ENCODE measurements at regions of chr19 and their contacts with region 1.

Region 1: GRCh38 chr19:4909897-4910593 is 744 bp downstream of the UHRF1 start:
- DNase-seq: peak; percentile 92
- H3K4me3 Mint-ChIP-seq: peak overlapping the region; percentile 89
- H3K27ac Mint-ChIP-seq: peak overlapping the region; percentile 84
- H3K4me1 Mint-ChIP-seq: peaks cover 36% of the 10 kb centered on the region
- H3K27me3 Mint-ChIP-seq: no peaks in the 10 kb centered on the region

Region 2: DNA sequence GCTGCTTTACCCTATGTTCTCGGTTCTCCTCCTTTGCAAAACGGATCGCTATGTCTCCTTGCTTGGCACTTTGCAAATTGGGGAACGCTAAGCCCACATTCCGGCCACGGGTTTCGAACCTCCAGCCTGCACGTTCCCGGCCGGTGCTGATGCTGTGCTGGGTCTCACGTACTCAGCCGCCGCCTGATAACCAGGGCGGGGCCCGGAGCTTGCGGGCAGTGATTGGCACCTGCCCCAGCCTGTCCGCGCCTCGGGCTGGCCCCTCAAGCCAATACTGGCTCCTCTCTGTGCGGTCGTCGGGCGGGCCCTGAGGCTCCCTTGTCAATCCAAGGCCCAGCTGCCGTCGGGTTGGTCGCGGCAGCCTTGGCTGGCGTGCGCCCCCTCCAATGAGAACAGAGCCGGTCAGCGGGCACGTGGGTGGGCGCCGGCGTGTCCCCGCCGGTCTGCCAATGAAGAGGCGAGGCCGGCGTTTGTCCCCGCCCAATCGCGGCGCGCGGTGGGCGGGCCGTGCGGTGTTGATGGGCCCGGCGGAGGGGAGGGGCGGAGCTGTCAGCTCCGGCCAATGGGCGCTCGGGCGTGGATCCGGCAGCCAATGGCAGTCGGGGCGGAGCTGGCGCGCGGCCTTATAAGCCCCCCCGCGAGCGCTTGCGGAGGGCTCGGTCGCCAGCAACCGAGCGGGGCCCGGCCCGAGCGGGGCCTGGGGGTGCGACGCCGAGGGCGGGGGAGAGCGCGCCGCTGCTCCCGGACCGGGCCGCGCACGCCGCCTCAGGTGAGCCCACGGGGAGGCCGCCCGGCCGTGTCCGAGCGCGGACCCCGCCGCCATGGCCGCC is 58.6 kb after region 1 on chr19 and contains the start of gene KDM4B:
- intact Hi-C with region 1: loop called (anchors 1 kb)
- DNase-seq: peak; percentile 100
- H3K4me3 Mint-ChIP-seq: peak within 1 kb of the TSS; percentile 94
- H3K27ac Mint-ChIP-seq: peak within 1 kb of the TSS; percentile 93
- H3K4me1 Mint-ChIP-seq: peaks cover 43% of the 10 kb centered on the region
- H3K27me3 Mint-ChIP-seq: no peaks in the 10 kb centered on the region
- total RNA-seq, gene KDM4B: 38.9 and 45.0 TPM in 2 replicates

Measured in activated T-helper 1 cell treated with anti-CD3 and anti-CD28 coated beads, Interleukin-12 subunit alpha, Interleukin-12 subunit beta, Interleukin-2, Interleukin-4 antibody, amounts not matched to agents 30 ng/mL and 10 ng/mL and 1 ng/mL, durations not matched to agents 14 hours and 24 hours and 36 hours (primary cell).